ENCODE measurements at regions of chr5 and their contacts with region 1.

Region 1: DNA sequence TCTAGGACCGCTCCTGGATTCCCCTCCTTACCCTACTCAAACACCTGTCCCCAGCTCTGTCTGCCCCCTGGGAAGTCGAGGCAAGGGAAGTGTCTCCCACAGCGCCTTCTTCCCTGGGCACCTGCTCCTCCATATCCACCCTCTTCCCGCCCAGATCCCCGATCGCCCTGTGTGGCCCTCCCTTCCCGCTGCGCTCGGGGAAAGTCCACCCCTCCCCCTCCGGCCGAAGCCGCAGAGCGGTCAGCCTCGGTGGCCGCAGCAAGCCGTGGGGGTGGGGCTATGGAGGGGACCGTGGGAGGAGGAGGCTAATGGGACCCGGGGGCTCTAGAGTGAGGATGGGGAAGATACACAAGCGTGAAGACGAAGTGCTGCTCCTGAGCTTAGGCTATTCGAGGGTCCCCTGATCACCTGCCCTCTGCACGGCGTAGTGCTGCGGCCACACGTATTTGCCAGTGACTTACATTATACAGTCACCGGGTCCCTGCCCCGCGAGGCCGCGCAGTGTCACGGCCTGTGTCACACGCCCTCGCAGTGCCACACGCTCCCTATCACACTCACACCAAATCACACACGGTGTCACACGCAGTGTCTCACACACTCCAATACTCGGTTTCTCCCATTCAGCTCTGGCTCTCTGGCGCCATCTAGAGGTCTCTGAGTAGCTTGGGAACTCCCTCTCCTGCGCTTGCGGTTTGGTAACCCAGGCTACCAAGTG is 658 bp upstream of the PCDH1 start:
- DNase-seq: peak; percentile 87 to 88
- H3K4me3 ChIP-seq: peak overlapping the region; percentile 43
- H3K4me3 Mint-ChIP-seq: peak overlapping the region; percentile 77
- H3K27ac Mint-ChIP-seq: no peak overlapping the region
- H3K4me1 ChIP-seq: peaks cover 34% of the 10 kb centered on the region
- H3K4me1 Mint-ChIP-seq: peaks cover 31% of the 10 kb centered on the region
- H3K27me3 ChIP-seq: peaks cover 5% of the 10 kb centered on the region
- H3K27me3 Mint-ChIP-seq: peaks cover 26% of the 10 kb centered on the region
- CTCF ChIP-seq: peak; percentile 93 to 95

Region 2: GRCh38 chr5:141664732-141665461 is 214.0 kb before region 1 on chr5:
- CTCF ChIA-PET with region 1: interaction called, 4 read pairs
- POLR2A ChIA-PET with region 1: no interaction called
- intact Hi-C with region 1: loop called (anchors 1 kb)
- DNase-seq: peak; percentile 76 to 84
- H3K4me3 ChIP-seq: no peak overlapping the region
- H3K4me3 Mint-ChIP-seq: no peak overlapping the region
- H3K27ac Mint-ChIP-seq: no peak overlapping the region
- H3K4me1 ChIP-seq: no peaks in the 10 kb centered on the region
- H3K4me1 Mint-ChIP-seq: no peaks in the 10 kb centered on the region
- H3K27me3 ChIP-seq: no peaks in the 10 kb centered on the region
- H3K27me3 Mint-ChIP-seq: no peaks in the 10 kb centered on the region
- CTCF ChIP-seq: peak; percentile 85 to 94

Region 3: GRCh38 chr5:141701360-141702119 is 177.3 kb before region 1 on chr5:
- CTCF ChIA-PET with region 1: interaction called, 4 read pairs
- POLR2A ChIA-PET with region 1: no interaction called
- intact Hi-C with region 1: loop called (anchors 1 kb)
- DNase-seq: no peak
- H3K4me3 ChIP-seq: no peak overlapping the region
- H3K4me3 Mint-ChIP-seq: no peak overlapping the region
- H3K27ac Mint-ChIP-seq: no peak overlapping the region
- H3K4me1 ChIP-seq: peaks cover 15% of the 10 kb centered on the region
- H3K4me1 Mint-ChIP-seq: no peaks in the 10 kb centered on the region
- H3K27me3 ChIP-seq: peaks cover 1% of the 10 kb centered on the region; the same call in 1 of the 2 replicates
- H3K27me3 Mint-ChIP-seq: peaks cover 25% of the 10 kb centered on the region
- CTCF ChIP-seq: no peak

Region 4: DNA sequence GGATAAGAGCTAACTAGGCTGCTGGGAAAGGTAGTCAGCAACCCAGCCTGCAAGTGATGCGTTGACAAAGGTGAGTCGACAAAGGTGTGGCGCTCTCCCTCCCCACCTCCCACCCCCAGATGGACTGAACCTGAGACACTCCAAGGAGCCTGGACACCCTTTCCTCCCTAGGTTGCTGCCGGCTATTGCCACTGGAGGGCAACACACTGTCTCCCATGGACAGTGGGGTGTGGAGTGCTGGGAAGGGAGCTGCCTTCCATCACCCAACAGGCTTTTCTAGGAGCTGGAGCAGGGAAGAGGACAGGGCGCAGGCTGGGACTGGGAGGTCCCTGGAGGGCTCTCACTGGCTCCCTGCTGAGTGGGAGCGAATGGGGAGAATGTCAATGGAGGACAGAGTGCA is 121.5 kb before region 1 on chr5:
- CTCF ChIA-PET with region 1: interaction called, 54 read pairs
- POLR2A ChIA-PET with region 1: no interaction called
- intact Hi-C with region 1: loop called (anchors 1 kb)
- DNase-seq: peak; percentile 58 to 63
- H3K4me3 ChIP-seq: no peak overlapping the region
- H3K4me3 Mint-ChIP-seq: no peak overlapping the region
- H3K27ac Mint-ChIP-seq: peak overlapping the region; percentile 2
- H3K4me1 ChIP-seq: peaks cover 7% of the 10 kb centered on the region
- H3K4me1 Mint-ChIP-seq: peaks cover 20% of the 10 kb centered on the region
- H3K27me3 ChIP-seq: no peaks in the 10 kb centered on the region
- H3K27me3 Mint-ChIP-seq: peaks cover 9% of the 10 kb centered on the region
- CTCF ChIP-seq: peak; percentile 20 to 50

Region 5: DNA sequence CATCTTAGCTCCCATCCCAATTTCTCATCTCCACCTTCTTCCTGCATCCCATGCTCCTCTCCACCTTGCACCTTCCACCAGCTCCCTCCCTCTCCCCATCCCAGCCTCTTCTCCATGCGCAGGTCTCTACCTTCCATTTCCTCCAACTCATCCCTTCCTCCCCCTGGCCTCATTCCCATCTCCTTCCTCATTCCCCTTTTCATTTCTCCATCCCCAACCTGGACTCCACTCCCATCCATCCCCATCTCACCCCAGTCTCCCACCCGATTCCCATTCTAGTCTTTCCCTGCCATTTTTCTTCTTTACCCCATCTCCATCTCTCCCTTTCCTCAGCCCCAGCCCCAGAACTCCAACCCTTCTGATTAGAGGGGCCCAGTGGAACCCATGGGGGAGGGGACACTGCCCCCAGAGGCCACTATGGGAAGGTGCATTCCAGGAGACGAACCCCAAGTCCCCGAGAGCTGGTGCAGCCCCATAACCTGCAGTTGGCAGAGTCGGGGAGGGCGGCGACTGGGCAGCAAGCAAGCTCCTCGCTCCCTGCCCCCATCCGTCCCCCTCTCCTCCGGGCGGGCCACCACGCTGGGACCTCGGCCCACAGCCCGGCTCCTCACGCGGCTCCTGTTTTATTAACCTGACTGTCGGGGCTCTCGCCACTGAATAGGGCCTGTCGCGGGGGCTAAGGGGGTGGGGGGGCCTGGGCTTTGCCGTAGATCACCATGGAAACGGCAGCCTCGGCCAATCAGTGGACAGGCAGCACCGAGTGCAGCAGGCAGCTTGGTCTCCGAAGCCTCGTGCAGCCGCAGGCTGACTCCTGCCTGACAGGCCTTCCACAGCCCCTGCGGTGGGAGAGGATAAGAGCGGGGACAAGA is 67.3 kb before region 1 on chr5:
- CTCF ChIA-PET with region 1: interaction called, 10 read pairs
- POLR2A ChIA-PET with region 1: no interaction called
- intact Hi-C with region 1: loop called (anchors 1 kb)
- DNase-seq: peak in 1 of 2 experiments; percentile 22
- H3K4me3 ChIP-seq: no peak overlapping the region
- H3K4me3 Mint-ChIP-seq: no peak overlapping the region
- H3K27ac Mint-ChIP-seq: no peak overlapping the region
- H3K4me1 ChIP-seq: no peaks in the 10 kb centered on the region
- H3K4me1 Mint-ChIP-seq: no peaks in the 10 kb centered on the region
- H3K27me3 ChIP-seq: peaks cover 1% of the 10 kb centered on the region; the same call in 1 of the 2 replicates
- H3K27me3 Mint-ChIP-seq: peaks cover 15% of the 10 kb centered on the region
- CTCF ChIP-seq: peak; percentile 78 to 83

Region 6: GRCh38 chr5:141825791-141826560 is 52.9 kb before region 1 on chr5:
- CTCF ChIA-PET with region 1: interaction called, 7 read pairs
- POLR2A ChIA-PET with region 1: no interaction called
- intact Hi-C with region 1: loop called (anchors 1 kb)
- DNase-seq: peak in 1 of 2 experiments; percentile 28
- H3K4me3 ChIP-seq: no peak overlapping the region
- H3K4me3 Mint-ChIP-seq: no peak overlapping the region
- H3K27ac Mint-ChIP-seq: no peak overlapping the region
- H3K4me1 ChIP-seq: no peaks in the 10 kb centered on the region
- H3K4me1 Mint-ChIP-seq: no peaks in the 10 kb centered on the region
- H3K27me3 ChIP-seq: no peaks in the 10 kb centered on the region
- H3K27me3 Mint-ChIP-seq: peaks cover 7% of the 10 kb centered on the region
- CTCF ChIP-seq: peak in 1 of 2 experiments; percentile 24

Region 7: DNA sequence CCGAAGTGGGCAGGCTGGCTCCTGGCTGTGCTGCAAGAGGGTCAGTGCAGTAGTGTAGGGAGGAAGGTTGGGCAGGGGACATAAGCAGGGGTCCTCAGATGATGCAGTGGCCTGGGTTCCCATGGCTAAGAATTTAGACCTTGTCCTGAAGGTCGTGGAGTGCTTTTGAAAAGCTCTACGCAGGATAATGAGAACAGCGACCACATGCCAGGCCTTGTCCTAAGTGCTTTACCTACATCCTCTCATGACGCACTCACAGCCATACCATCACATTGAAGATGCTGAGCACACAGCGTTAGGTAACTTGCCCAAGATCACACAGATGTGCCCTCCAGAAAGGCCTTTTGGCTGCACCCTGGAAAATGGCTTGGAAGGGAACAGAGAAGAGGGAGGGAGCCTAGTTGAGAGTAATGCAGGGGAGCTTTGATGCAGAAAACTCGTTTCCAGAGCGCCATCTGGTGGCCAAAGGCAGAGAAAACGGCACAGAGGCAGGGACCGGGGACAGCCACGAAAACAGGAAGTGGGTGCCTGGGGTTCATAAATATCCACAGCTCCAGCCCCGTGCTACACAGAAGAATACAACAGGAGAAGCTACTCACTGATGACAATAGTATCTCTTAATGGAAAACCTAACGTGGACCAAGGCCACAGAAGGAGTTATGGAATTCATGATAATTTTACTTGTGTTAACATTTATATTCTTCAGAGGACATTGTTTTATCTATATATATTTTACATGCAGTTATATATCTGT is 81.8 kb after region 1 on chr5:
- CTCF ChIA-PET with region 1: interaction called, 24 read pairs
- POLR2A ChIA-PET with region 1: no interaction called
- intact Hi-C with region 1: no loop called
- DNase-seq: peak; percentile 86 to 87
- H3K4me3 ChIP-seq: no peak overlapping the region
- H3K4me3 Mint-ChIP-seq: no peak overlapping the region
- H3K27ac Mint-ChIP-seq: no peak overlapping the region
- H3K4me1 ChIP-seq: 0 out of 2 replicates have a peak, but pooled peaks cover 5% of the 10 kb centered on the region
- H3K4me1 Mint-ChIP-seq: no peaks in the 10 kb centered on the region
- H3K27me3 ChIP-seq: no peaks in the 10 kb centered on the region
- H3K27me3 Mint-ChIP-seq: no peaks in the 10 kb centered on the region
- CTCF ChIP-seq: peak; percentile 81

Measured in Caco-2 (cell line).